Adrenal gland (tissue), 19 donors: ENCODE measurements at regions of chr5 and their contacts with region 1.

Region 1: GRCh38 chr5:18699681-18700080 is 1065.4 kb downstream of the TAF11L14 start:
- DNase-seq: no peak
- H3K4me3 ChIP-seq: no peak overlapping the region
- H3K27ac ChIP-seq: no peak overlapping the region
- H3K4me1 ChIP-seq: no peaks in the 10 kb centered on the region
- H3K27me3 ChIP-seq: no peaks in the 10 kb centered on the region
- CTCF ChIP-seq: no peak
- POLR2A ChIP-seq: no peak

Region 2: GRCh38 chr5:18465833-18466591 is 233.7 kb before region 1 on chr5:
- intact Hi-C with region 1: loop called (anchors 5 to 10 kb)
- DNase-seq: peak; percentile 61 to 89 (median 78)
- H3K4me3 ChIP-seq: no peak overlapping the region
- H3K27ac ChIP-seq: no peak overlapping the region
- H3K4me1 ChIP-seq: no peaks in the 10 kb centered on the region
- H3K27me3 ChIP-seq: no peaks in the 10 kb centered on the region
- CTCF ChIP-seq: peak; percentile 61 to 78 (median 72)
- POLR2A ChIP-seq: no peak

Region 3: DNA sequence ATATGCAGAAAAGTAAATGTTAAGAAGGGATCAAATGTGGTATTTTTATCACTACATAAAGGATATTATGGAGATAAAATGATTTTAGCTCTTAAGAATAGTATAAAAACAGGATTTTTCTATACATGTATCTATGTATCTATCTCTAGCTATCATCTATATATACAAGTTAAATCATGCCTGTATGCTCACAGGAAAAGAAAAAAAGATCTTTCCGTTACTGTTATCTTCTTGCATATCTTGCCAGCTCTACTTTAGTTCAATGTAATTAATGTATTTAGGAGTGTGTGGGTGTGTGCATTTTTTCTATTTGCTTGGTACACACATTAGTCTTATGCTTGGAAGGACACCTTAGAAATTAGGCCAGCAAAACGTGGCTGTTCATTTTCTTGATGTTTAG is 137.8 kb after region 1 on chr5:
- intact Hi-C with region 1: no loop called
- DNase-seq: no peak
- H3K4me3 ChIP-seq: no peak overlapping the region
- H3K27ac ChIP-seq: no peak overlapping the region
- H3K4me1 ChIP-seq: no peaks in the 10 kb centered on the region
- H3K27me3 ChIP-seq: no peaks in the 10 kb centered on the region
- CTCF ChIP-seq: no peak
- POLR2A ChIP-seq: no peak